ENCODE measurements at regions of chr2 and their contacts with region 1.

Region 1: DNA sequence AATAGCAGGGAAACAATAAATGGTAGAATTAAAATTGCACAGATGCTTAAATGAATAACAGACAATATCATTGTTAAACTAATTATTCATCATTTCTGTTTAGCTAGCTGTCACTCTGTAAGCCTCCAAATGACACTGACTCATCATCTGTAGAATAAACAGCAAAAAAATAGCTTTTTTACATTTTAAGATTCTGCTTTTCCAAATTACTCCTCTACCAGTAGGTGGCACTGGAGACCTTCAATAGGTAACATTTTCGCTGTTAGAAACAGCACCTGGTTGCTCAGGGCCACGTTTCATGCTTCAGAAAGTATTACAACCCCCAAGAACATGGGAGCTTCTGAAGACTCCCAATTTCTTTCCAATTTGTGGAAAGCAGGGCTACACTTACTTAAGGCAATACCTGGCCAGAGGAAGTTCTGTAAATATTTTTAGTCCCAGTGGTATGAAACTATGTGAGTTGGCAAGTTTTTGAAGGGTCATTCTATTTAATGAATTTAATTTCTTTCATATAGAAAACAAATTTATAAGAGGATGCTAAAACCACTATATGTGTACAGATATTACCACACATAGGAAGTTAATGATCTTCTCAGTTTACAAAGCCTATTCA is 45.4 kb downstream of the TTN start:
- DNase-seq: peak; percentile 30
- ATAC-seq: no peak; the same call in 1 of the 2 replicates
- H3K4me3 ChIP-seq: no peak overlapping the region
- H3K27ac ChIP-seq: no peak overlapping the region
- H3K4me1 ChIP-seq: no peaks in the 10 kb centered on the region
- H3K27me3 ChIP-seq: peaks cover 2% of the 10 kb centered on the region
- CTCF ChIP-seq: peak; percentile 82

Region 2: DNA sequence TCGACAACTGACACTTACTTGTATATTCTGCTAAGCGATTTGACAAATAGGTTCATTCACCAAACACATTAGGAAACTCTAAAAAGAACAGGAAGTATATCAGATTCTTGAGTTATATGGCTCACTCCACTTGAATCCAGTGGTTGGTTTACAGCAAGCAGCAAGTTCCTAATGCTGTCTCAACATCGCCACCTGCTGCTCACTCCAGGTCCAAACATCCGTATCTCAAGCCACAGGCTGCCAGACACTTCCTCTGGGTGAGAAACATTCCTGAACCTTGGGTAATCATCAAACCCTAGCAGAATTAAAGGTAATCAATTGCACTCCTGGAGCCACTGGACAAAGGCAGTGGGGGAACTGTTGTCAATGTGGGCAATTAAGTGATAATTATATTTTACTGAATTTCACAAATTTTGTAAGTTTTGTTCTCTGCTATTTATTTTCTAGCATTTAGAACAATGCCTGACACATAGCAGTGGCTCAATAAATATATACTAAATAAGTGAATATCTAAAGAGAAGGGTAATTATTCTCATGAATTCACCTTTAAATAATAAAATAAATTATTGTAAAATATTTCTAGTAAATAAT is 152.5 kb after region 1 on chr2:
- CTCF ChIA-PET with region 1: no interaction called
- POLR2A ChIA-PET with region 1: no interaction called
- in situ Hi-C with region 1: no loop called
- intact Hi-C with region 1: loop called (anchors 2 kb)
- DNase-seq: peak; percentile 69
- ATAC-seq: peak; percentile 89
- H3K4me3 ChIP-seq: no peak overlapping the region
- H3K27ac ChIP-seq: no peak overlapping the region
- H3K4me1 ChIP-seq: no peaks in the 10 kb centered on the region; the same call in 1 of the 2 replicates
- H3K27me3 ChIP-seq: no peaks in the 10 kb centered on the region
- CTCF ChIP-seq: peak; percentile 88

Region 3: DNA sequence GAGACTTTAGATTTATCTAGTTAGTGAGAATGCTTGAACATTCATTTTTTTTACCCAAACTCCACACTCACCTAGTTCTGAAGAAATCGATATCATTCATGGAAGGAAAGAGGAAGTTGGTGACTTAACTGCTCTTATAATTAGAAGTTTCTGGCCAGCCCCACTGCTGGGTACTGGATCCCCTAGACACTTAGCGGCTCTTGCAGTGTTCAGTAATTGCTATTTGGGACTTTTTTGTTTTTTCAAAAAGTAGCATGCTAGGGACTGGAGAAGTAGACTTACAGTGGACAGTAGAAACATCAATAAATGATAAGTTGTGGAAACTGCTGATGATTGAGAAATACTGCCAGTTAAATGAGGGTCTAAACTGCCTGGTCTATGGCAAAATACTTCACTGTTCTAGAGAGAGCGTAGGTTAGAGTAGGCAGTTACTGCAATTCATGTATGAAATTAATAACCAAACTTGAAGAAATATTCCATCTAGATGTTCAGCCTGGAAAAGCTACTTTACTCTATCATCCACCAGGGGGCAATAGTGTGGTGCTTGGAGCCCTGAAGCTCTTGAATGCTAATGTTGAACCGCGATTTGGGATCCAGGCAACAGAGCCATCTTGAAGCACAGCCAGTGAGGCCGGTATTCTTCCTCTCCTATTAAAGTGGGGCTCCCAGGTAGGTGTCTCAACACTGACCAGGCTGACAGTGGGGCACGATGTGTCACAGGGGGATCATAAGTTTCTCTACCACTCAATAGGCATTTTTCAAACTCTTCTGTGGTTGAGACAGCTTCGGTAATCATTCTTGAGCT is 648.9 kb after region 1 on chr2:
- CTCF ChIA-PET with region 1: no interaction called
- POLR2A ChIA-PET with region 1: no interaction called
- in situ Hi-C with region 1: no loop called
- intact Hi-C with region 1: loop called (anchors 10 kb)
- DNase-seq: no peak
- ATAC-seq: no peak
- H3K4me3 ChIP-seq: no peak overlapping the region
- H3K27ac ChIP-seq: no peak overlapping the region
- H3K4me1 ChIP-seq: no peaks in the 10 kb centered on the region
- H3K27me3 ChIP-seq: no peaks in the 10 kb centered on the region
- CTCF ChIP-seq: peak; percentile 79

Region 4: DNA sequence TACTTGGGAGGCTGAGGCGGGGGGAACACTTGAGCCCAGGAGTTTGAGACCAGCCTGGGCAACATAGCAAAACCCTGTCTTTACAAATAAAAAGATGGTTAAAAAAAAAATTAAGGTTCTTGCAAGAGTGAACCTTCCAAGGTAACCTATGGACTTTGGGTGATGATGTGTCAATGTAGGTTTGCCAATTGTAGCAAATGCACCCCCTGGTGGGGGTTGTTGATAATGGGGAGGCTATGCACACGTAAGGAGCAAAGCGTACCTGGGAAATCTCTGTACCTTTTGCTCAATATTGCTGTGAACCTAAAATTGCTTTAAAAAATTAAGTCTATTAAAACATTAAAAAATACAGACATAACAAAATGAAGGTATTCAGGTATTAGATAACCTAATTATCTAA is 1174.8 kb after region 1 on chr2:
- CTCF ChIA-PET with region 1: interaction called, 11 read pairs
- POLR2A ChIA-PET with region 1: no interaction called
- in situ Hi-C with region 1: no loop called
- intact Hi-C with region 1: no loop called
- DNase-seq: no peak
- ATAC-seq: no peak
- H3K4me3 ChIP-seq: no peak overlapping the region
- H3K27ac ChIP-seq: no peak overlapping the region
- H3K4me1 ChIP-seq: no peaks in the 10 kb centered on the region
- H3K27me3 ChIP-seq: no peaks in the 10 kb centered on the region
- CTCF ChIP-seq: peak; percentile 66

Measured in Panc1 (cell line).